Activated CD4-positive, alpha-beta T cell treated with anti-CD3 and anti-CD28 coated beads for 36 hours (primary cell): ENCODE measurements at regions of chr9 and their contacts with region 1.

Region 1: DNA sequence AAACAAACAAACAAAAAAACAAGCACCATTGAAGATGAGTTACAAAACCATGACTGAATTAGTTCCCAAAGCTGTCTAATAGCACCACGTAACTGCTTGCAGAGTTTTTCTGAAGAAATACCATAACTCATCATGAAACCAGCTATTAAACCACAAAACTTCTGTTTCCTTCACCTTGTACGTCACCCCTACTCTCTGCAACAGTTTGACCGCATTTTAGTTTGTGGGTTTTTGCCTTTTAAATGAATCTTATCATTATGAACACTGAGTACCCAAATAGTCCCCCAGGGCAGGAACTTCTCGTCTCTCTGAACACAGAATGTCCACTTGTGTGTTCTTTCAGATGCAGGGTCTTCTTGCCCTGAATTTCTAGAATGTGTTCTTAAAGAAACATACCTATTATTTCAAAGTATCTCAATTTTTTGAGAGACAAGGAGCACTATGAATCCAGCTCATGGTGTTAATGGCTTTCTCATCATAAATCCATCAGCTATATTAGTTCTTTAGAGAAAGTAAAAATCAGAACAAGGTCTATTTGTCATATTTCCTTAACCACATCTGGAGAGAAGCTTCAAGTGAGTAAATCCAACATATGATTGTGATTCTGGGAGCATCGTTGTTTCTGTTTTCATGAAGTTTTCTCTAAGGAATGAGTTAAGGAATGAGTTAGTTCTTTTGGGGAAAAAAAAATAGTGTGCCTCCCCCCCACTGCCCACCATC is 210.6 kb downstream of the AUH start:
- DNase-seq: peak; percentile 66
- ATAC-seq: peak; percentile 65
- H3K4me3 Mint-ChIP-seq: peak overlapping the region; percentile 13
- H3K27ac Mint-ChIP-seq: peak overlapping the region; percentile 95
- H3K4me1 Mint-ChIP-seq: peaks cover 79% of the 10 kb centered on the region
- H3K27me3 Mint-ChIP-seq: no peaks in the 10 kb centered on the region

Region 2: DNA sequence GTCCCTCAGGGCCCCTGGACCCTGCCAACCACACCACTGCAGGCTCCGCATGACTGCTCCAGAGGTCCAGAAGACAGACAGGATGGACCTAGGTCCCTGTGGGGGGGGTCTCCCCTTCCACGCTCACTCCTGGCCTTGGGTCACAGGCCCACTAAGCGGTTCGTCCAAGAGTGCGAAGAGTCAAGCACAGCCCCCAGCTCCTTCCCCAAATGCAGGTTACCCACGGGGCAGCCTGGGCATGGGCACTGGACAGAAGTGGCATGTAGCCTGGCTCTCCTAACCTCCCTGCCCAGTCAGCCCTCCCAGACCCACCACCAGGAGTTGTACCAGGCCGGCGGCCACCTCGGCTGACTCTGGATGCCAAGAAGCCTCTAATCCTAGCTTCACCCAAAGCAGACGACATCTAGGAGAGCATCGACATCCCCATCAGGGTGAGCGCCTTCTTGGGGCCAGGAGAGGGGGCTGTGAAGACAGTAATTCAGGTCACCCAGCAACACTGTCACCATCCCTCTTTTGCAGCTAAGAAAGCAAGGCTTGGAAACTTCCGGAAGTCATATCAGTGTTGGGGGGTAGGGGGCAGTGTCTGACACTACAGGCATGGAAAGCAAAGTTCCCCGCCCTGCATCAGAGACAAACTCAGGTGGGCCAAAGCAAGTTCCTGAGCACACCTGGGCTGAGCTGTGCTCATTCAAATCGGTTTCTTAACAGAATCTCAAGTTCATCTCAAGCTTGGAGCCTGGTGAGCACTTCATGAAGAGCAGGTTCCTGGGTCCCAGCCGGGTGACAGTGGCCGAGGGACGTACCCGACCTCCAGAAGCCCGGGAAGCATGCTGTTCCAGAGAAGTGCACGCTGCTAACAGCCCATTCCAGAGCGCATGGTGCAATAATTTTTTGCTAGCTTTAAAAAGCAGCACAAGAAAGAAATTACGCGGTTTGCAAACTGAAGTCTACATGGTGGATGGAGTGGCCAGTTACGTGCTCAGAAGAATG is 1722.0 kb before region 1 on chr9:
- CTCF ChIA-PET with region 1: no interaction called
- POLR2A ChIA-PET with region 1: no interaction called
- intact Hi-C with region 1: loop called in 1 of 2 experiments (anchors 10 kb)
- DNase-seq: peak; percentile 75
- ATAC-seq: peak; percentile 47
- H3K4me3 Mint-ChIP-seq: no peak overlapping the region
- H3K27ac Mint-ChIP-seq: peak overlapping the region; percentile 88
- H3K4me1 Mint-ChIP-seq: peaks cover 97% of the 10 kb centered on the region
- H3K27me3 Mint-ChIP-seq: no peaks in the 10 kb centered on the region

Region 3: DNA sequence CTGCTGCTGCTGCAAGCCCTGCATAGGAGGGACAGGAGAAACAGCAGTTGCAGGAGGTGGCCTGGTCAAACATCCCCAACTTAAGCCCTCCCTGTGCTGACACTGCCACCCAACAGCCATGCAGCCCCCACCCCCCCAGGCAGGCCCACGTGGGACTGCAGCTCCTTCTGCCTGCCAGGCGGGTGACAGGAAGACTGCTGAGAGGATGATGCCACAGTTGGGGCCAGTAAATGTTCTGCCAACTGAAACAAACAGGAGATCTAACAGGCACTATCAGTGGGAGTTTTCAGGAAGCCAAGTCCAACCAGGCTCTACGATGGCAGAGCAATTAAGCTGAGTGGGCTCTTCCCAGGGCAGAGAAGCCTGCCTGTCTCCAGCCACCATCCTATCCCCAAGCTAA is 539.6 kb before region 1 on chr9:
- CTCF ChIA-PET with region 1: no interaction called
- POLR2A ChIA-PET with region 1: no interaction called
- intact Hi-C with region 1: no loop called
- DNase-seq: no peak
- ATAC-seq: no peak
- H3K4me3 Mint-ChIP-seq: no peak overlapping the region
- H3K27ac Mint-ChIP-seq: no peak overlapping the region
- H3K4me1 Mint-ChIP-seq: no peaks in the 10 kb centered on the region
- H3K27me3 Mint-ChIP-seq: peaks cover 15% of the 10 kb centered on the region

Region 4: DNA sequence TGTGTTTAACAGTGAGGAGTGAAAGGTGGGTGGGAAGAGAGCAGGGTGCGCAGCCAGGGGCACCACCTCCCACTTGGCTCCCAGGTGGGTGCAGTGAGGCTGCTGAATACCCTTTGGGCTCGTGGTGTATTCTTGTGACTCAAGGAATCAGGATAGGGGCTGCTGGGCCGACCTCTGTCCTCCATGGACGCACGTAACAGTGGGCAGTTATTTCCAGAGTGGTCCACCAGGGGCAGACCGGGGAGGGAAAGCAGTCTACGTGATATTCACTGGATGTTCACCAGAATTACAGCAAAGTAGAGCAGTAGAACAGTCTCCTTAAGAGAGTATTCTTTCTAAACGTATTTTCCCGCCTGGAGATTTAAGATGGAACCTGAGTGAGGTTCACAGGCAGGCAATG is 261.0 kb before region 1 on chr9:
- CTCF ChIA-PET with region 1: no interaction called
- POLR2A ChIA-PET with region 1: no interaction called
- intact Hi-C with region 1: no loop called
- DNase-seq: no peak
- ATAC-seq: no peak
- H3K4me3 Mint-ChIP-seq: no peak overlapping the region
- H3K27ac Mint-ChIP-seq: no peak overlapping the region
- H3K4me1 Mint-ChIP-seq: no peaks in the 10 kb centered on the region
- H3K27me3 Mint-ChIP-seq: peaks cover 3% of the 10 kb centered on the region

Region 5: GRCh38 chr9:91071185-91071990 is 79.8 kb before region 1 on chr9:
- CTCF ChIA-PET with region 1: no interaction called
- POLR2A ChIA-PET with region 1: interaction called, 10 read pairs
- intact Hi-C with region 1: loop called (anchors 1 kb)
- DNase-seq: peak; percentile 88
- ATAC-seq: peak; percentile 97
- H3K4me3 Mint-ChIP-seq: peak overlapping the region; percentile 37
- H3K27ac Mint-ChIP-seq: peak overlapping the region; percentile 97
- H3K4me1 Mint-ChIP-seq: peaks cover 24% of the 10 kb centered on the region
- H3K27me3 Mint-ChIP-seq: peaks cover 7% of the 10 kb centered on the region

Region 6: DNA sequence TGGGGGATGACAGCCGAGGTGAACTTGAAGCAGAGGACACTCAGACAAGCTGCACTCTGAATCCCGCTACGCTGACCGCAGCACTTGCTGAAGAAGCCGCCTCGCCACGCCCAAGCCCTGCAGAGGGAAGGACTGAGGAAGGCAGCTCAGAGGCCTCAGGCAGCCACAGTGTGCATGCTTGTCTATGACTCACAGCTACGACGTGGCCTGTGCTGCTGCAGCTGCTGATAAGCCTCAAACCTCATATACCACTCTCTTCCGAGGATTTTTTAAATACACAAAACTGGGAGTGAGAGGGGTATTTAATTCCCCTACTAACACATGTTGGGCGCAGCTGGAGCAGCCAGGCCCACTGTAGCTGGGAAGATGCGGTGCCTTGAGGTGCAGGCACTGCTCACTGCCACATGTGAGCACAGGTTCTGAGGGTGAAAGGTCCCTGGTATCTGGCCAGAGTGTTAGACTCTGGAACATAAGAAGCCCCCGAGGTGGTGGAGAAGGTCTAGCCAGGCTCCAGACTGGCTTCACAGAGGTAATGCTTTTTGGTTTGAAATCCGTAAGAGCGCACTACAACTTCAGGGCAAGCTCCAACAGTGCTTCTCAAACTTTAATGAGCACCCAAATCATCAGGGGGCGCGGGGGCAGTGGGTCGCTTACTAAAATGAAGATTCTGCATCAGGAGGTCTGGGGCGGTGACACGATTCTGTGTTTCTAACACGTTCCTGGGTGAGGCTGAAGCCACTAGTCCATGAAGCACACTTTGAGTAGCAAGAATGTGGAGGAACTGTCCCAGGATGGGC is 13.8 kb after region 1 on chr9:
- CTCF ChIA-PET with region 1: interaction called, 21 read pairs
- POLR2A ChIA-PET with region 1: interaction called, 8 read pairs
- intact Hi-C with region 1: loop called (anchors 1 kb)
- DNase-seq: peak; percentile 91
- ATAC-seq: peak; percentile 80
- H3K4me3 Mint-ChIP-seq: peak overlapping the region; percentile 67
- H3K27ac Mint-ChIP-seq: peak overlapping the region; percentile 95
- H3K4me1 Mint-ChIP-seq: peaks cover 47% of the 10 kb centered on the region
- H3K27me3 Mint-ChIP-seq: no peaks in the 10 kb centered on the region

Region 7: DNA sequence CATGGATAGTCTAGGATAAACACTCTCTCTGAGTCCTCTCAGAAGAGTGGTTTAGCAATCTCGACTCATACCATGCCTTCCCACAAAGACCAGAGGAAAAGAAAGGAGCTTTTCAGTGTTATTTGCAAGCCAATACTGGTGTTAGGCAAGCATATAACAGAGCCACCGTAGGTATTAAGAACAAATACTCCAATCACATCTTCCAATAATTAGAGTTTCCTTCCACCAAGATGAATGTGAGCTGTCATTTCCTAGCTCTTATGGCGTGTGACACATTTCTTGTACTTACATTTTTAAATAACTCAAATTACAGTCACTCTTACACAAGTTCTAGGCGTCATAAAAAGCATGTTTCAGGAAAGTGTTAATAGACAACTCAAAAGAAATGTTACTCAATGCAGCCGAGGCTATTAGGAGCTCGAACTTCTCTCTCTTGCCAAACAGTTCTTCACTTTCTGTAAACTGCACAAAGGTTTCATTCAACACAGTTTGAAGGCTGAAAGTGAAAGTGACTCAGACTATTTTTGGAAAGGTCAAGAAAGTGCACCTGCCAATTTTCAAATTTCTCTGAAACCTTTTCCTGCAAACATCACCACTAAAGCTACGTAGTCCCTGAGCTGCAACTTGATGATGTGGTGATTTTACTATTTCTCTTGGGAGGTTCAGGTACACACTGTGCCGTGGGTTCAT is 56.7 kb after region 1 on chr9:
- CTCF ChIA-PET with region 1: interaction called, 19 read pairs
- POLR2A ChIA-PET with region 1: interaction called, 70 read pairs
- intact Hi-C with region 1: loop called (anchors 1 kb)
- DNase-seq: peak; percentile 51
- ATAC-seq: peak; percentile 80
- H3K4me3 Mint-ChIP-seq: peak overlapping the region; percentile 36
- H3K27ac Mint-ChIP-seq: peak overlapping the region; percentile 98
- H3K4me1 Mint-ChIP-seq: peaks cover 75% of the 10 kb centered on the region
- H3K27me3 Mint-ChIP-seq: no peaks in the 10 kb centered on the region

Region 8: DNA sequence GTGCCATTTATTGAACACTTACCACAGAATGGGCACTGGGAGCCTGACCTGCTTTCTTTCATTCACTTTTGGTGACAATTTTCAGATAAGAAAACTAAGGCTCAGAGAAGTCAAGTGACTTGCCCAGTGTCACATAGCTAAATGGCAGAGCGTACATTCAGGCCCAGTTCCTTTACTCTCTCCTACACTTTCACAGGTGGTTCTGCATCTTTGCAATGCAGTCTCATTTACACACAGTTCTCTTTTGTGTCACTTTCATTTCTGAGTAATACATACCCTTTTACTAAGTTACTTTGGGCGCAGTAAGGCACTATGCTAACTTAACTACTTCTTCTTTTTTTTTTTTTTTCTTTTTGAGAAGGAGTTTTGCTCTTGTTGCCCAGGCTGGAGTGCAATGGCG is 264.1 kb after region 1 on chr9:
- CTCF ChIA-PET with region 1: no interaction called
- POLR2A ChIA-PET with region 1: no interaction called
- intact Hi-C with region 1: loop called (anchors 1 kb)
- DNase-seq: peak; percentile 49
- ATAC-seq: peak; percentile 78
- H3K4me3 Mint-ChIP-seq: peak overlapping the region; percentile 41
- H3K27ac Mint-ChIP-seq: peak overlapping the region; percentile 96
- H3K4me1 Mint-ChIP-seq: peaks cover 85% of the 10 kb centered on the region
- H3K27me3 Mint-ChIP-seq: no peaks in the 10 kb centered on the region